IMR-90 (cell line): ENCODE measurements at regions of chr6 and their contacts with region 1.

Region 1: GRCh38 chr6:127855542-127856159 is 45.2 kb downstream of the THEMIS start:
- DNase-seq: peak; percentile 45
- ATAC-seq: peak; percentile 60; the same call in 1 of the 2 replicates
- H3K4me3 ChIP-seq: no peak overlapping the region
- H3K27ac ChIP-seq: no peak overlapping the region
- H3K4me1 ChIP-seq: no peaks in the 10 kb centered on the region
- H3K27me3 ChIP-seq: no peaks in the 10 kb centered on the region
- CTCF ChIP-seq: peak; percentile 61
- POLR2A ChIP-seq: no peak
- RAD21 ChIP-seq: peak; percentile 65

Region 2: DNA sequence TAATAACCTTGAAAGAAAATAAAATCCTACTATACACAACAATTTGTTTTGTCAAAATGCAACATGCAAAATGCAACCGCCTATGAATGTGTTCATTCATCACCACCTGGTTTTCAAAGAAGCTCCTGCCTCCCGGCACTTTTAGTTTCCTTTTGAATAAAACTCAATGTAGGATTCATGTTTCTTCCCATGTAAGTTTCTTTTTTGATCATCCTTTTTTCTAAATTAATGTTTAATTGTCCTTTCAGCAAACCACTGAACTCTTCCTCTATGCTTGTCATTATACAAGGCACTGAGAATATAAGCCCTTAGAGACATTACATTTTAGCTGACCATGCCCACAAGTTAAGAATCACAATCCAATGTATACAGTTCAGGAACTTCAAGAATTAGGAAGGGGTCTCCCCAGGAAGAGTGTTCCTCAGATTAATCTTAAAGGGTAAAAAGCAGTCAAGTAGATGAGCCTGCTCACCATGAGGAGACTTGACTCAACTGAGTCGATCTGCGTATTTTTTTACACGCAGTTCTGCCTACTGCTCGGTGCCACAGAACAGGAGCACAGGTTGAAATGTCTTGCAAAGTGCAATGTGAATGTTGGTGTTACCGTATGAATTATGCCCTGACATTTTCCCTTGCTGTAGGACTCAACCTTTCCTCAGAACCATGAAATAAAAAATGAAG is 52.4 kb after region 1 on chr6:
- CTCF ChIA-PET with region 1: no interaction called
- POLR2A ChIA-PET with region 1: no interaction called
- dilution Hi-C with region 1: no loop called
- in situ Hi-C with region 1: no loop called
- intact Hi-C with region 1: no loop called
- DNase-seq: no peak
- ATAC-seq: no peak
- H3K4me3 ChIP-seq: no peak overlapping the region
- H3K27ac ChIP-seq: no peak overlapping the region
- H3K4me1 ChIP-seq: no peaks in the 10 kb centered on the region
- H3K27me3 ChIP-seq: no peaks in the 10 kb centered on the region
- CTCF ChIP-seq: no peak
- POLR2A ChIP-seq: no peak
- RAD21 ChIP-seq: no peak

Region 3: DNA sequence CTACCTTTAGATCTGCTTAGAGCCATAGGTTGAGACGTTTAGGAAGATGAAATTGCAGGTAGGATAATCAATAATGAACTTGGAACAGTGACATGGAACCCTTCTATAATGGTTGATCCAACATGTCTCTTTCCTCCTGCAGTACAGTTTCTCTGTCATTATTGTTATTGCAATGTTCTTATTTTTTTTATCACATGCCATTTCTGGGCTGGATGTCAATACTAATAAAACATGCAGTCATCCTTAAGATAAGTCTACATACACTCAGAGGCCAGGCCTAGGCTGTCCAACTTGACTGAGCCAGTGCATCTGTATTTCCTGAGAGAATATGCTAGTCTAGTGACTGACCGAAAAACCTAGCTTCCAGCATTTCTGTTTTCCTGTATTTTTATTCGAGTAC is 120.5 kb after region 1 on chr6:
- CTCF ChIA-PET with region 1: no interaction called
- POLR2A ChIA-PET with region 1: no interaction called
- dilution Hi-C with region 1: no loop called
- in situ Hi-C with region 1: no loop called
- intact Hi-C with region 1: loop called (anchors 5 kb)
- DNase-seq: no peak
- ATAC-seq: no peak
- H3K4me3 ChIP-seq: no peak overlapping the region
- H3K27ac ChIP-seq: no peak overlapping the region
- H3K4me1 ChIP-seq: peaks cover 2% of the 10 kb centered on the region; the same call in 1 of the 2 replicates
- H3K27me3 ChIP-seq: no peaks in the 10 kb centered on the region
- CTCF ChIP-seq: no peak
- POLR2A ChIP-seq: no peak
- RAD21 ChIP-seq: no peak

Region 4: DNA sequence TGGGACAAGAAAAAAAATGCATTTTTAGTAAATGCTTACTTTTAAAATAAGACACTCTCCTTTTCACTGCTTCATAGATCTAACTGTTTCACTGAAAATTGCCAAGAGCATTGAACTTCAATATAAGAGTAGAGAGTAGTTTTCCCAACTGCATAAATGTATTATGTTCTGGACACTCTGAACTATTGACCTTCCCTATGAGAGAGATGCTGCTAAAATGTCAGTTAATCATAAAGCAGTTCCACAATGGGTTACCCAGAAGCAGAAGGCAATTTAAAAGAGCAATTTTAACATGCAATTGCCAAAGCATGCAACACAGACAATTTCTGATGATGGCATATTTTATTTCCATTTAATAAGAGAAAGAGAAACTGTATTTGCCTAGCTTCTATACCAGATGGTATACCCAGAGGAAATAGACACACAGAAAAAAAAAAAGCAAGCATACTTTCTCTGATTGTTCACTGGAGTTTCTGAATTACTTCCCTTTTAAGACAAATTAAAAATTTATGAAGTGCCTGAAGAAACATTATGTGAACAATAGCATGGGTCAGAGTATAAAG is 324.3 kb after region 1 on chr6:
- CTCF ChIA-PET with region 1: no interaction called
- POLR2A ChIA-PET with region 1: no interaction called
- dilution Hi-C with region 1: no loop called
- in situ Hi-C with region 1: no loop called
- intact Hi-C with region 1: loop called (anchors 10 kb)
- DNase-seq: no peak
- ATAC-seq: no peak
- H3K4me3 ChIP-seq: no peak overlapping the region
- H3K27ac ChIP-seq: no peak overlapping the region
- H3K4me1 ChIP-seq: no peaks in the 10 kb centered on the region
- H3K27me3 ChIP-seq: no peaks in the 10 kb centered on the region
- CTCF ChIP-seq: no peak
- POLR2A ChIP-seq: no peak
- RAD21 ChIP-seq: no peak

Region 5: DNA sequence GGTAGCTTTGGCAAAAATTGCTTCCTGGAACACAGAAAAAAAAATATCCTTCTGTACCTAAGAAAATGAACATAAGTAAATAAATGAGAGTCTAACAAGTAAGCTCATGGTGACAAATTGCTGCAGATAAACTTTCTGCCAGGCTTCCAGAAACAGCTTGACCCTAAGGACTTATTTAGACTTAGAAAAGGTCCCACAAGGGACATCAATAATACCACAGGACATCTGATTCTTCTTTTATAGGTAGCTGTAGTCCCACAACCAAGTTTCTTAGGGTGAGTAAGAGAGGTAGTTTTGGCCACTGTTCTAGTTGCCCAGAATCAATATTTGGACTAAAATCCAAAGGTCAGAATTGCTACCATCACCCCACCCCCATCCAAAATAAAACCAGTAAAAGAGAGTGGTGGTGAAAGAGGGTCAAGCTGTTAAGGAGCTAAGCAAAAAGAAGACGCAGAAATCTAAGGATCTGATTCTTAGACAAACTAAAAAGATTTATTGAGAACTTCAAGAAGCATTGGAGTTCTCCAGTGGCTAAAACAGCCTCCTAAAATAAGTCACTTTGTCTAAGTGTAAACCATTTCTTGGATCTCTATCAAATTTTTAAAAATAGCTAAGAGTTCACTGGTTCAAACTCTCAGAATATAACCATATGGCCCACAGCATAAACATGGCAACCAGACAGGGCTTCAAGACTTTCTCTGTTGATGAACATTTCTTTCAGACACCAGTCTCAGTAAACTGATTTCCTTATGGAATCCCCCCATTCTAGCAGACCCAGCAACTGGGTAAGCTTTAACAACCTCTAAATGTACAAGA is 484.2 kb after region 1 on chr6:
- CTCF ChIA-PET with region 1: no interaction called
- POLR2A ChIA-PET with region 1: no interaction called
- dilution Hi-C with region 1: no loop called
- in situ Hi-C with region 1: no loop called
- intact Hi-C with region 1: loop called (anchors 10 kb)
- DNase-seq: peak; percentile 74
- ATAC-seq: peak; percentile 59
- H3K4me3 ChIP-seq: no peak overlapping the region
- H3K27ac ChIP-seq: peak overlapping the region; percentile 58; the same call in 1 of the 2 replicates
- H3K4me1 ChIP-seq: peaks cover 9% of the 10 kb centered on the region
- H3K27me3 ChIP-seq: no peaks in the 10 kb centered on the region
- CTCF ChIP-seq: no peak
- POLR2A ChIP-seq: no peak
- RAD21 ChIP-seq: no peak

Region 6: GRCh38 chr6:128731249-128732165 is 875.9 kb after region 1 on chr6:
- CTCF ChIA-PET with region 1: no interaction called
- POLR2A ChIA-PET with region 1: no interaction called
- dilution Hi-C with region 1: no loop called
- in situ Hi-C with region 1: loop called (anchors 10 kb)
- intact Hi-C with region 1: loop called (anchors 5 kb)
- DNase-seq: peak; percentile 66
- ATAC-seq: peak; percentile 86
- H3K4me3 ChIP-seq: no peak overlapping the region
- H3K27ac ChIP-seq: no peak overlapping the region
- H3K4me1 ChIP-seq: no peaks in the 10 kb centered on the region
- H3K27me3 ChIP-seq: no peaks in the 10 kb centered on the region; the same call in 1 of the 2 replicates
- CTCF ChIP-seq: peak; percentile 80
- POLR2A ChIP-seq: 0 out of 2 replicates have a peak, but pooled peaks have one; percentile 23
- RAD21 ChIP-seq: peak; percentile 93